Transverse colon (tissue), 4 donors: ENCODE measurements at regions of chr10 and their contacts with region 1.

Region 1: DNA sequence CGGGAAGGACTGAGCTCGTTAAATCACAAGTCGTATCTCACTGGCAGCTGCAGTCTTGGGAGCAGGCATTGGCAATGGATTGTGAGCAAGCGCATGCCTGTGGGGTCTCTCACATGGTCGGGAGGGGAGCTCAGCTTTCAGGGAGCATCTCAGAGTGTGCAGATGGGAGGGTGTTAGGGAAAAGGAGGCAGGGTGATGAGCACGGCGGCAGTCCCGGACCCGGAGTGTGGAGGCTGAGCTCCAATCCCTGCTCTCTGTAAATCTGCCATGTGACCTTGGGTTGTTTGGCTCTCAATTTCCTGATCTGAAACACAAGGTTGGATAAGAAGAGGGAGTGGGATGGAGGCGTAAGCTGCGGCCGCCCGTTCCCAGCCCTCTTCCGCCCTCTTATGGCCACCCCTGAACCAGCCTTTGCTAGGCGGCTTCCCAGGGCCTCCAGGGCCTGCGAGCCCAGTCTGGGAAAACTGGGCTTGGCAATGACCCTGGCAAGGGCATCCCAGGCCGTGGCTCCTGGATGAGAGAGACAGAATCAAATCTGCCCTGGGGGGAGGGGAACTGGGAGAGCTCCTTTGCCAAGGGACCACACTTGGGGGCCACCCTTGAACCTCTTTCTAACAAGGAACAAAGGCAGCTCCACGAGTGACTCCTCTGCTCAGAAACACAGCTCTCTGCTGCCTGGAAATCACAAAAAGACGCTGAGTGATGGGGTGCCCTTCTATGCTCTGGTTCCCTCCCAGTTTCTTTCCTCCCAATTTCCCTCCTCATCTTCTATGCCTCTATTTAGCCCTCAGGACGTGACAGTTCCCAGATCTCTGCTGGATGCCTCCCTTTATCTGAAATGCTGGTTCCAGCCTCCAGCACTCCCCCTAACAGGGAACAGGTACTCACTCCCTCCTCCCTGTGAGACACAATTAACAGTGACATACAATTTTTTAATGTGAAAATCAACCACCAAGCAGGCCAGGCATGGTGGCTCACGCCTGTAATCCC is 41.7 kb upstream of the LOXL4 start:
- DNase-seq: peak; percentile 66
- H3K4me3 ChIP-seq: no peak overlapping the region
- H3K27ac ChIP-seq: no peak overlapping the region
- H3K4me1 ChIP-seq: peaks cover 0 to 14% (median 2%) of the 10 kb centered on the region in 4 donors
- H3K27me3 ChIP-seq: peaks cover 6% of the 10 kb centered on the region
- CTCF ChIP-seq: peak; percentile 65 to 78 (median 76)
- EP300 ChIP-seq: no peak
- POLR2A ChIP-seq: no peak

Region 2: DNA sequence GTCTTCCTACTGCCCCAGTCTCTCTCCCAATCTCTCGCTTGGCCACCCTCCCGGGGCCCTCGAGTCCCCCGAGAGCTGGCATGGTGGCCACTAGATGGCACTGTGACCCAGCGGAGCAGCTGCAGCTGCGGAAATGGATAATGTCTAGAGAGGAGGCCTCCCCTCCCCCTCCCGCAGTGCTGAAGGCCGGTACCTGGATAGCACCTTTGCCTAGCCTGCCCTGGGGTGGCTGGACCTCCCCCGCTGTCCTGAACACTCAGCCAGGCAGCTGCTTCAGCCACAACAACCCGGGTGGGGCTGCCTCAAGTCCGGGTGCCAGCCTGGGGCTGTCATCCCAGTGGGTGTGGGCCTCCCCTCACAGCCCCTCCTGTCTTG is 394.8 kb before region 1 on chr10:
- in situ Hi-C with region 1: no loop called
- intact Hi-C with region 1: loop called (anchors 5 kb)
- DNase-seq: peak; percentile 78
- H3K4me3 ChIP-seq: no peak overlapping the region
- H3K27ac ChIP-seq: no peak overlapping the region
- H3K4me1 ChIP-seq: peaks cover 0 to 2% (median 0%) of the 10 kb centered on the region in 4 donors
- H3K27me3 ChIP-seq: peaks cover 12% of the 10 kb centered on the region
- CTCF ChIP-seq: peak; percentile 73 to 91 (median 86)
- EP300 ChIP-seq: no peak
- POLR2A ChIP-seq: no peak

Region 3: DNA sequence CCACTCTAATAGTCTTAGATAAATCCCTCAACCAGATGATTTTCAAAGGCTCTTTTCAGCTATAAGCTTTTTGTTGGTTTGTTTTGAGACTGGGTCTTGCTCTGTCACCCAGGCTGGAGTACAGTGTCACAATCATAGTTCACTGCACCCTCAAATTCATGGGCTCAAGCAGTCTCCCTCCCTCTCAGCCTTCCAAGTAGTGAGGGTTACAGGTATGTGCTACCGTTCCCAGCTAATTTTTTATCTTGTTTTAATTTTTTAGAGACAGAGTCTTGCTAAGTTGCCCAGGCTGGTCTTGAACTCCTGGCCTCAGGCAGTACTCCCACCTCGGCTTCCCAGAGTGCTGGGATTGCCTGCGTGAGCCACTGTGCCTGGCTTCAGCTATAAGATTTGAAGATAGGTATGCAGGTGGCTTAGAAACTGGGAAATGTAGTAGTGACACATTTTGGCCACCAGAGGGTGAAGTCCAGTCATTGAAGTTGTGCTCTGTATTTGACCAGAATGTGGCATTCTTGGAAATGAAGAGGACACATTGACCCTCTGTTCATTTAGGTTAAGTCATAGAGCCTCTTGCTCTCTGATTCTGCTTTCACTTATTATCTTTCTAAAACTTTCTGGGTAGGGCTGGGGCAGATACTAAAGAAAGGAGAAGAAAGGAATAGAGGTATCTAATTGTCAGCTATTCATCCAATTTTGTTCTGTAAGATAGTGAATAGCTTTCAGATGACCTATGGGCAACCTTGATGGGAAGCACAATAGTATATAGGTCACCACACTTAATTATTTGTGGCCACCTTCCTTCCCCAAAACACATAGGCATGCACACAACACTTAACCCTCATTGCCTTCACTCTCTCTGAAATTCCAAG is 139.2 kb before region 1 on chr10:
- in situ Hi-C with region 1: no loop called
- intact Hi-C with region 1: loop called (anchors 2 kb)
- DNase-seq: peak; percentile 38
- H3K4me3 ChIP-seq: no peak overlapping the region
- H3K27ac ChIP-seq: no peak overlapping the region
- H3K4me1 ChIP-seq: peaks cover 0 to 21% (median 0%) of the 10 kb centered on the region in 4 donors
- H3K27me3 ChIP-seq: no peaks in the 10 kb centered on the region
- CTCF ChIP-seq: peak; percentile 74 to 81 (median 78)
- EP300 ChIP-seq: no peak
- POLR2A ChIP-seq: no peak

Region 4: DNA sequence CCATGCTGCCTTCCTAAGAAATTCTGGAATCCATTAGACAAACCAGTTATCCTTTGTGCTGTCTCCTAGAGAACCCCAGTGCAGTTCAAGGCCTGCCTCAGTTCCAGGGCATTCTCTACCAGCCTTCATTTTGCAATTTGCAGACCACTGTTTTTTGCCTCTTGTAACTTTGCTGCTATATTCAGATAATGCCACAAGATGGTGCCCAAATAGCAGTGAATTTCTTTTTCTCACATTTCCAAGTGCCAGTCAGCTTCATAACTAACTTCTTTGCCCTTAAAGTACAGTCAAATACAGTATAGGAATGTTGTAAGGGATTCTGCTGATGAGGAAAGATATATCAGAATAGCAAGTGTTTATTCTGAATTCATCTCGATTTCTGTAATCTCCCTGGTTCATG is 66.8 kb before region 1 on chr10:
- in situ Hi-C with region 1: no loop called
- intact Hi-C with region 1: loop called (anchors 1 kb)
- DNase-seq: no peak
- H3K4me3 ChIP-seq: no peak overlapping the region
- H3K27ac ChIP-seq: no peak overlapping the region
- H3K4me1 ChIP-seq: peaks cover 0 to 3% (median 0%) of the 10 kb centered on the region in 4 donors
- H3K27me3 ChIP-seq: no peaks in the 10 kb centered on the region
- CTCF ChIP-seq: peak in 2 of 5 experiments; percentile 13 to 25
- EP300 ChIP-seq: no peak
- POLR2A ChIP-seq: no peak

Region 5: DNA sequence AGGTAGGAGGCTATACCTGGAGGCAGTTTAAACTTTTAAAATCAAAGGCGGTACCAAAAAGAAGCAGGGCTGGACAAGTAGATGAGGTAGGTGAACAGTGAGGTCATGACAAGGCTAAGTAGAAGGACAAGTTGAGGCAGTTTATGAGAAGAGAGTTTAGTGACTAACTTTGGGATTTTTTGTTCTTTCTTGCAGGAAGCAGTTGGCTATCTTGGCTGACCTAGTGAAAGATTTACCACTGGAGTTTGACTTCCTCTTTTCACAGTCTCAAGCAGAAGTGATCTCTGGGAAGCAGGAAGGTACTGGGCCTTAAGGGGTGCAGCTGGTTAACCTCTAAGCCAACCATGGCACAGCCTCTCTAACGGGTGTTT is 1375.9 kb after region 1 on chr10:
- in situ Hi-C with region 1: no loop called
- intact Hi-C with region 1: no loop called
- DNase-seq: no peak
- H3K4me3 ChIP-seq: no peak overlapping the region
- H3K27ac ChIP-seq: peak overlapping the region; percentile 36 to 64 (median 58)
- H3K4me1 ChIP-seq: peaks cover 0 to 18% (median 6%) of the 10 kb centered on the region in 4 donors
- H3K27me3 ChIP-seq: no peaks in the 10 kb centered on the region
- CTCF ChIP-seq: no peak
- EP300 ChIP-seq: no peak
- POLR2A ChIP-seq: no peak